Adrenal gland (tissue), 19 donors: ENCODE measurements at regions of chrX and their contacts with region 1.

Region 1: DNA sequence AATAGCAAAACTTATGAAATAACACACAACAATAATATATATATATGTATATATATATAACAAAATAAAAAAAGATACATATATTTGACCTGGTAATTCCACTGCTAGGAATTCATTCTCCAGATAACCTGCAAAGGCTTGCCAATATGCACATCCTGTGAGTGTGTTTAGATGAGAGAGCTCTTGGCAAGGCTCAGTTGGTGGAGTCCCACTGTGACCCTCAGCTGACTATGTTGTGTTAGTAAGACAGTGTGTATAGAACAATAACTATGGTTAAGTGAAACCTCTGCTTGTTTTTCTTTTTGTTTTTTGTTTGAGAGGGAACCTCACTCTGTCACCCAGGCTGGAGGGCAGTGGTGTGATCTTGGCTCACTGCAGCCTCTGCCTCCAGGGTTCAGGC is 39.5 kb upstream of the RBMX start:
- DNase-seq: no peak
- H3K4me3 ChIP-seq: no peak overlapping the region
- H3K27ac ChIP-seq: no peak overlapping the region
- H3K4me1 ChIP-seq: no peaks in the 10 kb centered on the region
- H3K27me3 ChIP-seq: no peaks in the 10 kb centered on the region
- CTCF ChIP-seq: no peak
- POLR2A ChIP-seq: no peak

Region 2: GRCh38 chrX:136608295-136609171 is 311.5 kb before region 1 on chrX:
- intact Hi-C with region 1: loop called in 1 of 2 experiments (anchors 10 kb)
- DNase-seq: peak; percentile 16 to 62 (median 34)
- H3K4me3 ChIP-seq: no peak overlapping the region
- H3K27ac ChIP-seq: no peak overlapping the region
- H3K4me1 ChIP-seq: no peaks in the 10 kb centered on the region
- H3K27me3 ChIP-seq: peaks cover 21% of the 10 kb centered on the region
- CTCF ChIP-seq: peak in 4 of 6 experiments; percentile 20 to 39 (median 28)
- POLR2A ChIP-seq: no peak